Caco-2 (cell line): ENCODE measurements at regions of chr20 and their contacts with region 1.

Region 1: GRCh38 chr20:35718972-35719635 is 19.9 kb downstream of the ROMO1 start:
- DNase-seq: no peak
- H3K4me3 ChIP-seq: no peak overlapping the region
- H3K4me3 Mint-ChIP-seq: no peak overlapping the region
- H3K27ac Mint-ChIP-seq: no peak overlapping the region
- H3K4me1 ChIP-seq: 0 out of 2 replicates have a peak, but pooled peaks cover 3% of the 10 kb centered on the region
- H3K4me1 Mint-ChIP-seq: peaks cover 7% of the 10 kb centered on the region
- H3K27me3 ChIP-seq: no peaks in the 10 kb centered on the region
- H3K27me3 Mint-ChIP-seq: no peaks in the 10 kb centered on the region
- CTCF ChIP-seq: no peak

Region 2: GRCh38 chr20:34045294-34045693 is 1673.8 kb before region 1 on chr20:
- CTCF ChIA-PET with region 1: no interaction called
- POLR2A ChIA-PET with region 1: interaction called, 10 read pairs
- intact Hi-C with region 1: no loop called
- DNase-seq: peak in 1 of 2 experiments; percentile 32
- H3K4me3 ChIP-seq: no peak overlapping the region
- H3K4me3 Mint-ChIP-seq: no peak overlapping the region
- H3K27ac Mint-ChIP-seq: peak overlapping the region; percentile 17
- H3K4me1 ChIP-seq: peaks cover 42% of the 10 kb centered on the region
- H3K4me1 Mint-ChIP-seq: peaks cover 32% of the 10 kb centered on the region
- H3K27me3 ChIP-seq: no peaks in the 10 kb centered on the region
- H3K27me3 Mint-ChIP-seq: no peaks in the 10 kb centered on the region
- CTCF ChIP-seq: no peak

Region 3: DNA sequence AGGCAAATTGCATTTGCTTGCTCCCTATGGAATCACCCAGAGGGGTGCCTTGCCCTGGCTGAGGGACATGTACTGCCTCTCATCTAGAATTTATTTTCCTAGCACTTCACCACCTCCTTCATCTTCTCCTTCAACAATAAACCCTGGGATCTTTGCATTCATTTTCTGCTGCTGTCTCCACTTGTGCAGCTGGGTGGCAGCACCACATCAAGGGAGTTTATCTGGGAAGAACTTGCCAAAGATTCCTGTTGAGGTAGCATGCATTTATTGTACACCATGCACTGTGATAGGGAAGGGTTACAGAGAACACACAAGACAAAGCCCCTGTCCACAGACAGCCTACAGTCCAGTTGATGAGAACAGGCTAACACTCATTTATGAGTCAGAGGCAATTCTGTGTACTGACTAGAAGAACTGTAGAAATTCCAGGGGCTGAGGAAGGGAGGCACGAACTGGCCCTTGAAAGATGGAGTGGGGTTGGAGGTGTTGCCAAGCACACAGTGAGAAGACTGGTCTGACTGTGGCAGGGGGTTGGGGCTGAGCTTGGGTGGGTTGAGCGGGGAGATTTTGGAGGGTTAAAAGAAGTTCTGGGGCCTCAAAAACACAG is 207.2 kb before region 1 on chr20:
- CTCF ChIA-PET with region 1: no interaction called
- POLR2A ChIA-PET with region 1: no interaction called
- intact Hi-C with region 1: no loop called
- DNase-seq: peak in 1 of 2 experiments; percentile 68
- H3K4me3 ChIP-seq: no peak overlapping the region
- H3K4me3 Mint-ChIP-seq: no peak overlapping the region
- H3K27ac Mint-ChIP-seq: no peak overlapping the region
- H3K4me1 ChIP-seq: no peaks in the 10 kb centered on the region
- H3K4me1 Mint-ChIP-seq: no peaks in the 10 kb centered on the region
- H3K27me3 ChIP-seq: no peaks in the 10 kb centered on the region
- H3K27me3 Mint-ChIP-seq: no peaks in the 10 kb centered on the region
- CTCF ChIP-seq: peak; percentile 88 to 92

Region 4: GRCh38 chr20:35664544-35665221 is 54.4 kb before region 1 on chr20 and contains the starts of genes CPNE1 and RBM12:
- CTCF ChIA-PET with region 1: no interaction called
- POLR2A ChIA-PET with region 1: no interaction called
- intact Hi-C with region 1: no loop called
- DNase-seq: peak; percentile 99
- H3K4me3 ChIP-seq: peak within 1 kb of the TSS; percentile 87
- H3K4me3 Mint-ChIP-seq: peak within 1 kb of the TSS; percentile 84
- H3K27ac Mint-ChIP-seq: peak within 1 kb of the TSS; percentile 96
- H3K4me1 ChIP-seq: peaks cover 30% of the 10 kb centered on the region
- H3K4me1 Mint-ChIP-seq: peaks cover 22% of the 10 kb centered on the region
- H3K27me3 ChIP-seq: no peaks in the 10 kb centered on the region
- H3K27me3 Mint-ChIP-seq: no peaks in the 10 kb centered on the region
- CTCF ChIP-seq: no peak
- total RNA-seq, gene CPNE1: 815 and 833 TPM in 2 replicates
- total RNA-seq, gene RBM12: 146 and 147 TPM in 2 replicates